Activated B cell treated with CpG ODN at 0.5 μM for 24 hours (primary cell): ENCODE measurements at regions of chr15 and their contacts with region 1.

Region 1: GRCh38 chr15:22838292-22839042 is at the start of gene NIPA2:
- DNase-seq: peak; percentile 99
- ATAC-seq: peak; percentile 83
- H3K4me3 Mint-ChIP-seq: peak within 1 kb of the TSS; percentile 94
- H3K27ac Mint-ChIP-seq: peak within 1 kb of the TSS; percentile 97
- H3K4me1 Mint-ChIP-seq: peaks cover 34% of the 10 kb centered on the region
- H3K27me3 Mint-ChIP-seq: no peaks in the 10 kb centered on the region
- CTCF ChIP-seq: no peak
- total RNA-seq, gene NIPA2: 93.7 and 98.8 TPM in 2 replicates

Region 2: GRCh38 chr15:22786868-22787698 is 51.4 kb before region 1 on chr15:
- CTCF ChIA-PET with region 1: no interaction called
- POLR2A ChIA-PET with region 1: interaction called, 38 read pairs
- intact Hi-C with region 1: loop called (anchors 1 kb)
- DNase-seq: peak; percentile 52
- ATAC-seq: peak; percentile 10
- H3K4me3 Mint-ChIP-seq: peak overlapping the region; percentile 86
- H3K27ac Mint-ChIP-seq: peak overlapping the region; percentile 82
- H3K4me1 Mint-ChIP-seq: peaks cover 42% of the 10 kb centered on the region
- H3K27me3 Mint-ChIP-seq: no peaks in the 10 kb centered on the region
- CTCF ChIP-seq: no peak

Region 3: GRCh38 chr15:22795206-22796063 is 43.0 kb before region 1 on chr15:
- CTCF ChIA-PET with region 1: no interaction called
- POLR2A ChIA-PET with region 1: interaction called, 11 read pairs
- intact Hi-C with region 1: loop called (anchors 1 kb)
- DNase-seq: no peak
- ATAC-seq: no peak
- H3K4me3 Mint-ChIP-seq: no peak overlapping the region
- H3K27ac Mint-ChIP-seq: peak overlapping the region; percentile 82
- H3K4me1 Mint-ChIP-seq: peaks cover 72% of the 10 kb centered on the region
- H3K27me3 Mint-ChIP-seq: no peaks in the 10 kb centered on the region
- CTCF ChIP-seq: no peak

Region 4: DNA sequence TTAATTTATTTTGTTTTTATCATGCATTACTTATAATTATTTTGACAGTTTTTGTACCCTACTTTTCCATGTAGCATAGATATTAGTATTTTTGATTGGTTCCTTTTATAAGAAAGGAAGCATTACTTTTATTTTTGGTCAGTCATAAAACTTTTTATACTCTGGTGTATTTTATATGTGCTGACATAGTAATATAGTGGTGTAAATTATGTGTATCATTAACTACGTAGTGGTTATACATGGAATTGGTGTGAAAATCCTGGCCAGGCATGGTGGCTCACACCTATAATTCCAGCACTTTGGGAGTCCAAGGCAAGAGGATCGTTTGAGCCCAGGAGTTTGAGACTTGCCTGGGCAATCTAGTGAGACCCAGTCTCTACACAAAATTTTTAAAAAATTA is 18.8 kb before region 1 on chr15:
- CTCF ChIA-PET with region 1: no interaction called
- POLR2A ChIA-PET with region 1: no interaction called
- intact Hi-C with region 1: loop called (anchors 2 kb)
- DNase-seq: no peak
- ATAC-seq: no peak
- H3K4me3 Mint-ChIP-seq: no peak overlapping the region
- H3K27ac Mint-ChIP-seq: no peak overlapping the region
- H3K4me1 Mint-ChIP-seq: no peaks in the 10 kb centered on the region
- H3K27me3 Mint-ChIP-seq: no peaks in the 10 kb centered on the region
- CTCF ChIP-seq: no peak

Region 5: GRCh38 chr15:22895469-22896190 is 57.2 kb after region 1 on chr15:
- CTCF ChIA-PET with region 1: no interaction called
- POLR2A ChIA-PET with region 1: no interaction called
- intact Hi-C with region 1: no loop called
- DNase-seq: no peak
- ATAC-seq: no peak
- H3K4me3 Mint-ChIP-seq: no peak overlapping the region
- H3K27ac Mint-ChIP-seq: no peak overlapping the region
- H3K4me1 Mint-ChIP-seq: no peaks in the 10 kb centered on the region
- H3K27me3 Mint-ChIP-seq: no peaks in the 10 kb centered on the region
- CTCF ChIP-seq: no peak

Region 6: GRCh38 chr15:22978691-22979520 is 140.4 kb after region 1 on chr15:
- CTCF ChIA-PET with region 1: no interaction called
- POLR2A ChIA-PET with region 1: interaction called, 7 read pairs
- intact Hi-C with region 1: loop called (anchors 1 kb)
- DNase-seq: peak; percentile 30
- ATAC-seq: peak; percentile 69
- H3K4me3 Mint-ChIP-seq: peak overlapping the region; percentile 83
- H3K27ac Mint-ChIP-seq: no peak overlapping the region
- H3K4me1 Mint-ChIP-seq: peaks cover 19% of the 10 kb centered on the region
- H3K27me3 Mint-ChIP-seq: peaks cover 8% of the 10 kb centered on the region
- CTCF ChIP-seq: no peak

Region 7: GRCh38 chr15:23039151-23039916 is 200.9 kb after region 1 on chr15 and contains the start of gene TUBGCP5:
- CTCF ChIA-PET with region 1: no interaction called
- POLR2A ChIA-PET with region 1: interaction called, 18 read pairs
- intact Hi-C with region 1: loop called (anchors 10 kb)
- DNase-seq: peak; percentile 85
- ATAC-seq: peak; percentile 96
- H3K4me3 Mint-ChIP-seq: peak within 1 kb of the TSS; percentile 92
- H3K27ac Mint-ChIP-seq: peak within 1 kb of the TSS; percentile 88
- H3K4me1 Mint-ChIP-seq: peaks cover 12% of the 10 kb centered on the region
- H3K27me3 Mint-ChIP-seq: no peaks in the 10 kb centered on the region
- CTCF ChIP-seq: no peak
- total RNA-seq, gene TUBGCP5: 21.7 and 26.2 TPM in 2 replicates